GM12878 (cell line): ENCODE measurements at regions of chr1 and their contacts with region 1.

Region 1: GRCh38 chr1:203172128-203173010 is 3.3 kb downstream of the MYBPH start:
- DNase-seq: no peak
- ATAC-seq: peak; percentile 65
- H3K4me3 ChIP-seq: no peak overlapping the region
- H3K27ac ChIP-seq: no peak overlapping the region
- H3K4me1 ChIP-seq: peaks cover 4% of the 10 kb centered on the region; the same call in 1 of the 2 replicates
- H3K27me3 ChIP-seq: no peaks in the 10 kb centered on the region; a peak in 2 of 4 replicates
- CTCF ChIP-seq: peak; percentile 69 to 96 (median 90)
- EP300 ChIP-seq: no peak
- POLR2A ChIP-seq: no peak
- RAD21 ChIP-seq: peak; percentile 54

Region 2: DNA sequence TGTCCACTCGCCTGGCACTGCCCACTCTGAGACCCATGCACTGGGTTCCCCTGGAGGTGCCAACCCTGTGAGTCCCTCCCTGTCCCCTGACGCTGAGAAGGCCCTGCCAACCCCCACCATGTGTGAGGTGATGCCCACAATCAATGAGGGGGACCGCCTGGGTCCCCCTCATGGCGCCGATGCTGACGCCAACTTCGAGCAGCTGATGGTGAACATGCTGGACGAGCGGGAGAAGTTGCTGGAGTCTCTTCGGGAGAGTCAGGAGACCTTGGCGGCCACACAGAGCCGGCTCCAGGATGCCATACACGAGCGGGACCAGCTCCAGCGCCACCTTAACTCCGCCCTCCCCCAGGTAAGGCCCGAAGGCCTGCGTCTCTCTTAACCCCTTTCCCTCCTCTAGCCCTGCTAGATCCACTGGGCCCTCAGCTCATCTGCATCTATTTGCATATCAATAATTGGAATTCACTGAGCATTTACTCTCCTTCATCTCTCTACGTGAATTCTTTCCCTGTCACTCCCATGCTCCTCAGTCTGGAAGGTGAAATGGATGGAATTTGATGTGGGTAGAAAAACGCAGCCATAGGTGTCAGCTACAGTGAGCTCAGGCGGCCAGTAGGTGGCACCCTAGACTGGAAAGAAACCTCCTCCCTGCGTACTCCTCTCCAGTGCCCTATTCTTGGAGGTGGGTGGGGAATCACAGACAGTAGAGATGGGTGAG is 133.3 kb before region 1 on chr1:
- CTCF ChIA-PET with region 1: interaction called, 65 read pairs
- POLR2A ChIA-PET with region 1: no interaction called
- RAD21 ChIA-PET with region 1: interaction called, 17 read pairs
- SMC1A ChIA-PET with region 1: interaction called, 24 read pairs
- in situ Hi-C with region 1: no loop called
- intact Hi-C with region 1: loop called (anchors 1 kb)
- DNase-seq: no peak
- ATAC-seq: peak; percentile 91
- H3K4me3 ChIP-seq: no peak overlapping the region
- H3K27ac ChIP-seq: no peak overlapping the region
- H3K4me1 ChIP-seq: peaks cover 11% of the 10 kb centered on the region
- H3K27me3 ChIP-seq: no peaks in the 10 kb centered on the region
- CTCF ChIP-seq: peak; percentile 88 to 91 (median 89)
- EP300 ChIP-seq: no peak
- POLR2A ChIP-seq: no peak
- RAD21 ChIP-seq: peak; percentile 79

Region 3: DNA sequence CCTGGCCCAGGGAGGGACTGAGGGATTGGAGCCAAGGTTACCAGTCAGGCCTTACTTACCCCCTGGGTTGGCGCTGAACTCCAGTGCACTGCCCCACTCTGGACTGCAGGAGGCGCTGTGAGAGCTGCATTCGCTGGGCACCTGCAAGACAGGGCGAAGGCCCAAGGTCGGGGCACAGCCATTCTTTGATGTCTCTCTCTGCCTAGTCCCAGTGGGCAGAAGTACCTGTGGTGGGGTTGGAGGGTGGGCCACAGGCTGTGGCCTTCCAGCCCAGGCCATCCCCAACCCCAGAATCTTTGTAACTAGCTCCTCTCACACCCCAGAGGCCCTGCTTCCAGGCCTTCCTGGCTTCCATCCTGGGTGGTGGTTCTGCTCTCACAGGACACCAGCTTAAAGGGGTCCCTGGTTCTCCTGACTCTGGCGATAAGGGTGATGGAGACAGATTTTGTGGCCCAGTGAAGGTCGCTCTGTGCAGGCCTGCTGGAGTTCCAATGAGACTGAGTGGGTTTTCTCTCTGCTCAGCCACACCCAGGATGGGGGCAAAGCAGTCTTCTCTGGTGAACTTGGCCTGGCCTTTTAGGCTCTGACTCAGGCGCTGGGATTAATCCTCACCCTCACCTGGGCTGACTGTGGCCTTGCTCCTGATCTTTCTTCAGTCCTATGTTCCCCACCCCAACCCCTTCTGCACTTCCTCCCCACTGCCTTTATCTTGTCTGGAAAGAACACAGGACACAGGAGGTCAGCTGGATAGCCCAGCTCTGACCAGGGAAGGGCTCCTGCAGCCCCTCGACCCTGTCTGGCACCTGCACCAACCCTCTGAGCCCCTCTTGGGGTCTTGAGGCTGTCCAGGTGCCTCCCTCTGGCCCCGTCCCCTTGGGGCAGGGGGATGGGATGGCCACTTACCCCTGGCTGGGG is 87.5 kb before region 1 on chr1:
- CTCF ChIA-PET with region 1: interaction called, 15 read pairs
- POLR2A ChIA-PET with region 1: no interaction called
- RAD21 ChIA-PET with region 1: interaction called, 6 read pairs
- SMC1A ChIA-PET with region 1: no interaction called
- in situ Hi-C with region 1: no loop called
- intact Hi-C with region 1: no loop called
- DNase-seq: no peak
- ATAC-seq: peak; percentile 75
- H3K4me3 ChIP-seq: no peak overlapping the region
- H3K27ac ChIP-seq: no peak overlapping the region
- H3K4me1 ChIP-seq: no peaks in the 10 kb centered on the region
- H3K27me3 ChIP-seq: peaks cover 0 to 3% of the 10 kb centered on the region in 2 experiments; a peak in 2 of 4 replicates
- CTCF ChIP-seq: peak; percentile 39 to 73 (median 58)
- EP300 ChIP-seq: no peak
- POLR2A ChIP-seq: no peak
- RAD21 ChIP-seq: peak; percentile 51

Region 4: DNA sequence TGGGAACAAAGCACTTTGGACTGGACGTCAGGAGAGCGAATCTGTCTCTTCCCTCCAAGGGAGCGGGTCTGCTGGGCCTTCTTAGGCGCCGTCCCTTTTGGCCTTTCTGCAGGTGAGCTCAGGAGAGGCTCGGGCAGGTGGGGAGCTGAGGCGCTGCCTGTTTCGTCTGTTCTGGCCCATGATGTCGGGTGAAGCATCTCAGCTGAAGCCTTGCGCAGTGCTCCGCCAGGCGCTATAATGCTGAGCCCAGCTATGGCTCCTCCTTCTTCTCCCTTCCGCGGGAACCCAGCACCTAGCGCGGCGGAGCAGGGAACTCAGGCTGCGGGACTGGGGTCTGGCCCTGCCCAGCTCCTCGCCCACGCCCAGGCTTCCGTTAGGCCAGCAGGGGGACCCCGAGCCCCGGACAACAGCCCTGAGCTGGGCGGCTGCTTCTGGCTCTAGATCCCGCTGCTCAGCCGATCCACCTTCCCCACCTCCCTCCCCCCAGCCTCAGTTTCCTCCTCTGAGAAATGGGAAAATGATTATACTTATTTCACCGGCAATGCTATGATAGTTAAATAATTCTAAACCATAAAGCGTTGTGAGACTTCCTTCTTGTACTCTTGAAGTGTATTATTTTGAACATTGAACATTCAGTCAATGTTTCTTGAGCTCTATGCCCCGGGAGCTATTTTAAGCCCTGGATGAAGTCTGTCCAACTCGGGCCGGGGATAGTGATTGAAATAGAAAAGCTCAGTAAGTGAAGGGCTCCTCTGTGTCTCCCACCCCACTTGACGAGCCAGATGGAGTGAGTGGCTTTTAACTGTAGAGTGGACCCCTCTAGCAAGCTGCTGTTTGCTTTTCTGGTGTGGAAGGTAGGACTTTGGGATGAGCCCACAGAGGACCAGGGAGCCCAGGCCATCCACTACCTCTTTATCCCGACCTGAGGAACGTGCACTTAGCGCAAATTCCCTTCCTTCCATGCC is 54.5 kb before region 1 on chr1:
- CTCF ChIA-PET with region 1: interaction called, 22 read pairs
- POLR2A ChIA-PET with region 1: no interaction called
- RAD21 ChIA-PET with region 1: interaction called, 13 read pairs
- SMC1A ChIA-PET with region 1: interaction called, 12 read pairs
- in situ Hi-C with region 1: no loop called
- intact Hi-C with region 1: loop called (anchors 5 kb)
- DNase-seq: no peak
- ATAC-seq: peak; percentile 96
- H3K4me3 ChIP-seq: no peak overlapping the region
- H3K27ac ChIP-seq: no peak overlapping the region
- H3K4me1 ChIP-seq: no peaks in the 10 kb centered on the region
- H3K27me3 ChIP-seq: peaks cover 6 to 9% of the 10 kb centered on the region in 2 experiments; a peak in 3 of 4 replicates
- CTCF ChIP-seq: peak; percentile 28 to 72 (median 64)
- EP300 ChIP-seq: no peak
- POLR2A ChIP-seq: no peak
- RAD21 ChIP-seq: peak; percentile 47

Region 5: DNA sequence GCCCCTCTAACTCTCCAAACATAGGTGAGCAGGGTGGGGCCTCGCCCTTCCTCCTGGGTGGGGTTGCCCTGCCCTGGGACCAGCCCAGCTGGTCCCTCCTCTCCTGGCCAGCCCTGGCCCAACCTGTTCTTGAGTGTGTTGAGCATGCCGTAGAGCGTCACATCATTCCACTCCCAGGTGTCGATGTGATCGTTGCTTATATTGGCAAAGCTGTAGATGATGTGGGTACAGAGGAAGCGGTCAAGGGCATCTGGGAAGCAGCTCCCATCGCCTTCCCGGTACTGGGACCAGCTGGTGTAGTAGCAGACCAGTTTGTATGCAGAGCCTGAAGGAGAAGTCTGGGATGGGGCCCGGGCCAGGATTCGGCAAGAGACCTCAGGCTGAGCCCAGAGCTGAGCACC is 12.7 kb after region 1 on chr1:
- CTCF ChIA-PET with region 1: interaction called, 25 read pairs
- POLR2A ChIA-PET with region 1: interaction called, 4 read pairs
- RAD21 ChIA-PET with region 1: interaction called, 3 read pairs
- SMC1A ChIA-PET with region 1: interaction called, 10 read pairs
- in situ Hi-C with region 1: no loop called
- intact Hi-C with region 1: no loop called
- DNase-seq: no peak
- ATAC-seq: no peak
- H3K4me3 ChIP-seq: no peak overlapping the region
- H3K27ac ChIP-seq: no peak overlapping the region
- H3K4me1 ChIP-seq: 0 out of 2 replicates have a peak, but pooled peaks cover 2% of the 10 kb centered on the region
- H3K27me3 ChIP-seq: no peaks in the 10 kb centered on the region; a peak in 1 of 4 replicates
- CTCF ChIP-seq: no peak
- EP300 ChIP-seq: no peak
- POLR2A ChIP-seq: no peak
- RAD21 ChIP-seq: no peak

Region 6: DNA sequence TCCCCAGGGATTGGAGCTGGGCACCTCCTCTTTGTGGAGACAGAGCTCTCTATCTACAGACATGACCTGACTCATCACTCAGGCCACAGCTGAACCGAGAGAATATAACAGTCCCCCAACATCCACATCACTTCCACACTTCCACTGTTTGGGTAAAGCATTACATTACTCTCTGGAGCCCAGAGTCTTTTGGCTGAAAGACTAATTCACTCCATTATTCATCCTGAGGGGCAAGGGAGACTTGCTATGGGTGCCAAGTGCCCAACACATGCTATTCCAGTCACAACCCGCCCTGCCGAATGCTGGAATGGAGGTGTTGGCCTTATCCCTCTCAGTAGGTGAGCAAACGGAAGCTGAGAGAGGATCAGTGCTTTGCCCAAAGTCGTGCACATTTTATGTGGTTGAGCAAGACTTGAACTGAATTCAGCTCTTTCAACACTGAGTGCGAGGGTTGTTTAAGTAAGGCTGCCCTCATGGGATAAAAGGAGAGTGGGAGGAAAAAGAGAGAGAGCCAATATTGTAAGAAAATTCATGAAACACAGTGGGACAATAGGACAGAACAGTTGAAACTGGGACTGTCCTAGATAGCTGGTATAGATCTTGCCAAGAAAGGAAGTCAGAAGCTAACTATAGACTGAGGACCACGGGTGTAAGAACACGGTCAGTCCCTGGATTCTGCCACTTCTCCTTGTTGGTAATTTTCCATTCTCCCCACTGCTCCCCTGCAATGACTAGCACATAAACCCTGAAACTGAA is 27.6 kb after region 1 on chr1:
- CTCF ChIA-PET with region 1: interaction called, 11 read pairs
- POLR2A ChIA-PET with region 1: no interaction called
- RAD21 ChIA-PET with region 1: no interaction called
- SMC1A ChIA-PET with region 1: interaction called, 5 read pairs
- in situ Hi-C with region 1: no loop called
- intact Hi-C with region 1: no loop called
- DNase-seq: no peak
- ATAC-seq: no peak
- H3K4me3 ChIP-seq: no peak overlapping the region
- H3K27ac ChIP-seq: no peak overlapping the region
- H3K4me1 ChIP-seq: no peaks in the 10 kb centered on the region
- H3K27me3 ChIP-seq: peaks cover 0 to 5% of the 10 kb centered on the region in 2 experiments; a peak in 3 of 4 replicates
- CTCF ChIP-seq: no peak
- EP300 ChIP-seq: no peak
- POLR2A ChIP-seq: no peak
- RAD21 ChIP-seq: no peak

Region 7: GRCh38 chr1:203206129-203206687 is 33.8 kb after region 1 on chr1:
- CTCF ChIA-PET with region 1: interaction called, 15 read pairs
- POLR2A ChIA-PET with region 1: no interaction called
- RAD21 ChIA-PET with region 1: no interaction called
- SMC1A ChIA-PET with region 1: interaction called, 5 read pairs
- in situ Hi-C with region 1: no loop called
- intact Hi-C with region 1: no loop called
- DNase-seq: no peak
- ATAC-seq: no peak
- H3K4me3 ChIP-seq: no peak overlapping the region
- H3K27ac ChIP-seq: no peak overlapping the region
- H3K4me1 ChIP-seq: no peaks in the 10 kb centered on the region
- H3K27me3 ChIP-seq: no peaks in the 10 kb centered on the region; a peak in 3 of 4 replicates
- CTCF ChIP-seq: no peak
- EP300 ChIP-seq: no peak
- POLR2A ChIP-seq: no peak
- RAD21 ChIP-seq: no peak